Caco-2 (cell line): ENCODE measurements at regions of chr9 and their contacts with region 1.

Region 1: GRCh38 chr9:107282753-107283625 is at the start of gene RAD23B:
- DNase-seq: peak; percentile 99
- H3K4me3 ChIP-seq: peak within 1 kb of the TSS; percentile 78
- H3K4me3 Mint-ChIP-seq: peak within 1 kb of the TSS; percentile 93
- H3K27ac Mint-ChIP-seq: peak within 1 kb of the TSS; percentile 92
- H3K4me1 ChIP-seq: peaks cover 37% of the 10 kb centered on the region
- H3K4me1 Mint-ChIP-seq: peaks cover 27% of the 10 kb centered on the region
- H3K27me3 ChIP-seq: no peaks in the 10 kb centered on the region
- H3K27me3 Mint-ChIP-seq: no peaks in the 10 kb centered on the region
- CTCF ChIP-seq: peak in 1 of 2 experiments; percentile 1
- total RNA-seq, gene RAD23B: 188 TPM in 2 replicates

Region 2: GRCh38 chr9:106906136-106906535 is 376.9 kb before region 1 on chr9:
- CTCF ChIA-PET with region 1: no interaction called
- POLR2A ChIA-PET with region 1: no interaction called
- intact Hi-C with region 1: no loop called
- DNase-seq: no peak
- H3K4me3 ChIP-seq: no peak overlapping the region
- H3K4me3 Mint-ChIP-seq: no peak overlapping the region
- H3K27ac Mint-ChIP-seq: no peak overlapping the region
- H3K4me1 ChIP-seq: no peaks in the 10 kb centered on the region
- H3K4me1 Mint-ChIP-seq: peaks cover 6% of the 10 kb centered on the region
- H3K27me3 ChIP-seq: no peaks in the 10 kb centered on the region
- H3K27me3 Mint-ChIP-seq: no peaks in the 10 kb centered on the region
- CTCF ChIP-seq: no peak

Region 3: DNA sequence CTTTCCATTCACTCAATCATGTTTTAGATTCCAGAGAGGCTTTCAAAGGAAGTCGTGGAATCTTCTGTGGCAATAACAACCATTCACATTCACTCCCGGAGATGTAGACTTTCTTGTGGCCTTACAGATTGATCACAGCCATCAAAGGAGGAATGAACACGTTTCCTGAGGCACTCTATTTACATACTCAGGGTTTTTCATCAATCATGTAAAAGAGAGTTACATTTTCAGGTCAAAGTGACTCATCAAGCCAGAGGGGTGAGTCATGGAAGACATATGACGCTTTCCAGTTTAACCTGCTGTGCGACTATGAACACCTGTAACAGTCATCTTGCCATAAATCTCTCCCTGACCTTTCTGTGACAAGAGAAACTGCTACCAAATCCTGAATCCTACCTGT is 39.2 kb before region 1 on chr9:
- CTCF ChIA-PET with region 1: interaction called, 3 read pairs
- POLR2A ChIA-PET with region 1: interaction called, 3 read pairs
- intact Hi-C with region 1: loop called (anchors 1 kb)
- DNase-seq: peak; percentile 87 to 89
- H3K4me3 ChIP-seq: no peak overlapping the region
- H3K4me3 Mint-ChIP-seq: peak overlapping the region; percentile 58
- H3K27ac Mint-ChIP-seq: peak overlapping the region; percentile 89
- H3K4me1 ChIP-seq: peaks cover 72% of the 10 kb centered on the region
- H3K4me1 Mint-ChIP-seq: peaks cover 34% of the 10 kb centered on the region
- H3K27me3 ChIP-seq: no peaks in the 10 kb centered on the region
- H3K27me3 Mint-ChIP-seq: no peaks in the 10 kb centered on the region
- CTCF ChIP-seq: no peak

Region 4: DNA sequence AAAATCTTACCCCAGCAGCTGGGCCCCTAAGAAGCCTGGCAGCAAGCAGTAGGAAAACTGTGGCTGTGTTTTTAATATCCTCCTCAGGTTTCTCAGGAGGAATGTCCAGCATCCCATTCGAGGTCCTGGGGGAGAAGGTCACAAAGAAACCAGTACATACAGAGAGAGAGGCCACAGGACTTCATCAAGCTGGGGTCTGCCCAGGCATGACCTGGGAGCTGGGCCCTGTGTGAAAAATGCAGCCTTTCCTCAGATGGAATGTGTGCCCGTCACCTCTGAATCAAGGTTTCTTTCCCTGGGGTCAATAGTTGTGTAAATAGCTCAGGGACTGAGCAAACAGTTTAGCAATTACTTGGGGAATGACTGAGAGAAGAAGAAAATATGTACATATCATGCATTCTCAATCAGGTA is 33.9 kb before region 1 on chr9:
- CTCF ChIA-PET with region 1: interaction called, 4 read pairs
- POLR2A ChIA-PET with region 1: interaction called, 3 read pairs
- intact Hi-C with region 1: loop called (anchors 1 kb)
- DNase-seq: peak; percentile 83 to 93
- H3K4me3 ChIP-seq: no peak overlapping the region
- H3K4me3 Mint-ChIP-seq: peak overlapping the region; percentile 56
- H3K27ac Mint-ChIP-seq: peak overlapping the region; percentile 75
- H3K4me1 ChIP-seq: peaks cover 69% of the 10 kb centered on the region
- H3K4me1 Mint-ChIP-seq: peaks cover 44% of the 10 kb centered on the region
- H3K27me3 ChIP-seq: no peaks in the 10 kb centered on the region
- H3K27me3 Mint-ChIP-seq: no peaks in the 10 kb centered on the region
- CTCF ChIP-seq: no peak